ENCODE measurements at regions of chr17 and their contacts with region 1.

Region 1: GRCh38 chr17:18038861-18039534 is at the starts of genes ATPAF2 and GID4:
- DNase-seq: peak; percentile 100
- H3K4me3 ChIP-seq: peak within 1 kb of the TSS; percentile 74 to 98 (median 94)
- H3K27ac ChIP-seq: peak within 1 kb of the TSS; percentile 50 to 93 (median 87)
- H3K4me1 ChIP-seq: peaks cover 24 to 86% (median 47%) of the 10 kb centered on the region in 6 donors
- H3K27me3 ChIP-seq: no peaks in the 10 kb centered on the region
- CTCF ChIP-seq: peak in 2 of 11 experiments; percentile 29 to 37
- POLR2A ChIP-seq: peak in 2 of 3 donors; percentile 27 to 49
- total RNA-seq, gene ATPAF2: 25.2 to 57.1 (median 35.5) TPM
- total RNA-seq, gene GID4: 5.7 to 11.5 (median 9.4) TPM

Region 2: DNA sequence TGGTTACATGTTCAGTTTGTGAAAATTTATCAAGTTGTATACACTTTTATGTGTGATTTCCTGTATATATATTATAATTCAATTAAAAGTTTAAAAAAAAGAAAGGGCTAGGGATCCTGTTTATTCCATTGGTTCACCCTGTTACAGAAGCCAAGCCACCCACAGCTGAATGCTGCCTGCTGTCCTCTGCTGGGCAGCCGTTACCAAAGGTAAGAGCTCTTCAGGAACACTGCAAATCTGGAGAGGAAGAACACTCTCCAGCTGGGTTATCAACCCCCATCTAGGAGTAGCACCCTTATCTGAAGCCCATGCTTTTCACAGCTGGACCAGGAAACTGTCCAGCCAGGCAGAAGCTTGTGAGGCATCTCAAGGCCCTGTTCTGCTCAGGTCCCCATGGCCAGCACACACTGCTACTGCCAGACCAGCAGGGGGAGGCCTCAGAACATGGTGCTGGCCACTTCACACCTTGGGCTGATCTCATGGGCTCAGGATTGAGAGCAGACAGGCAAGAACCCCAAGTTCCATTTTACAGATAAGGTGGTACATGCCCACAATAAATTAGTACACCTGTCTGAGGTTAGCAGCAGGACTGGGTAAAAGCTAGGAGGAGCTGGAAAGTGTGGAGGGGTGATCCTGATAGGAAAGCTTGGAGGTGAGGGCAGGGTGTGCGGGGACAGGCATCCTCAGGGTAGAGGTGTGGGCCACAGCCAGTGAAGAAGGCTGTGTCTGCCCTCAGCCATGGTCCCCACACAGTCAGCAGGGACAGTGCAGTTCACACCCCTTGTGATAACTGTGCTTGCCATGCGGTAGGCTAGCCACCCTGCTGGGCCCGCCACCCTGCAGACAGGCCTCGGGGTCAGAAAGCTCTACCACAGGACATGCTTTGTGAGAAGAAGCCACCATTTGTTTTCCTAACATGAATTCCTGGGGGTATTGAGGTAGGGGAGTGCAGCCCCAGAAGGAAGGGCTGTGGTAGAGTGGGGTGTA is 147.9 kb before region 1 on chr17:
- intact Hi-C with region 1: loop called (anchors 10 kb)
- DNase-seq: peak; percentile 81
- H3K4me3 ChIP-seq: no peak overlapping the region
- H3K27ac ChIP-seq: no peak overlapping the region
- H3K4me1 ChIP-seq: peaks cover 0 to 19% (median 5%) of the 10 kb centered on the region in 6 donors
- H3K27me3 ChIP-seq: no peaks in the 10 kb centered on the region
- CTCF ChIP-seq: peak; percentile 30 to 78 (median 67)
- POLR2A ChIP-seq: no peak

Region 3: GRCh38 chr17:17972126-17972951 is 66.7 kb before region 1 on chr17 and contains the starts of genes DRC3 and TOM1L2:
- intact Hi-C with region 1: no loop called
- DNase-seq: peak; percentile 100
- H3K4me3 ChIP-seq: peak within 1 kb of the TSS; percentile 70 to 97 (median 87)
- H3K27ac ChIP-seq: peak within 1 kb of the TSS; percentile 86 to 96 (median 94)
- H3K4me1 ChIP-seq: peaks cover 9 to 69% (median 35%) of the 10 kb centered on the region in 6 donors
- H3K27me3 ChIP-seq: no peaks in the 10 kb centered on the region
- CTCF ChIP-seq: peak in 8 of 11 experiments; percentile 10 to 51 (median 33)
- POLR2A ChIP-seq: peak in 2 of 3 donors; percentile 52 to 69
- total RNA-seq, gene DRC3: 0.37 to 7.3 (median 2.3) TPM
- total RNA-seq, gene TOM1L2: 27.0 to 82.6 (median 56.5) TPM

Region 4: GRCh38 chr17:18176176-18176575 is 137.2 kb after region 1 on chr17:
- intact Hi-C with region 1: no loop called
- DNase-seq: no peak
- H3K4me3 ChIP-seq: no peak overlapping the region
- H3K27ac ChIP-seq: no peak overlapping the region
- H3K4me1 ChIP-seq: peaks cover 0 to 7% (median 3%) of the 10 kb centered on the region in 6 donors
- H3K27me3 ChIP-seq: no peaks in the 10 kb centered on the region
- CTCF ChIP-seq: no peak
- POLR2A ChIP-seq: no peak

Region 5: GRCh38 chr17:18191967-18192366 is 153.0 kb after region 1 on chr17:
- intact Hi-C with region 1: no loop called
- DNase-seq: no peak
- H3K4me3 ChIP-seq: no peak overlapping the region
- H3K27ac ChIP-seq: peak overlapping the region in 2 of 8 donors; percentile 48 to 50
- H3K4me1 ChIP-seq: peaks cover 35 to 96% (median 75%) of the 10 kb centered on the region in 6 donors
- H3K27me3 ChIP-seq: no peaks in the 10 kb centered on the region
- CTCF ChIP-seq: peak in 3 of 11 experiments; percentile 9 to 21 (median 12)
- POLR2A ChIP-seq: no peak